Caco-2 (cell line): ENCODE measurements at regions of chr3 and their contacts with region 1.

Region 1: GRCh38 chr3:15557511-15557946 is 36.0 kb upstream of the COLQ start:
- DNase-seq: peak; percentile 71 to 73
- H3K4me3 ChIP-seq: no peak overlapping the region
- H3K4me3 Mint-ChIP-seq: no peak overlapping the region
- H3K27ac Mint-ChIP-seq: no peak overlapping the region
- H3K4me1 ChIP-seq: 0 out of 2 replicates have a peak, but pooled peaks cover 4% of the 10 kb centered on the region
- H3K4me1 Mint-ChIP-seq: peaks cover under 1% of the 10 kb centered on the region
- H3K27me3 ChIP-seq: no peaks in the 10 kb centered on the region
- H3K27me3 Mint-ChIP-seq: no peaks in the 10 kb centered on the region
- CTCF ChIP-seq: peak; percentile 22 to 54

Region 2: GRCh38 chr3:15405448-15406050 is 152.0 kb before region 1 on chr3:
- CTCF ChIA-PET with region 1: no interaction called
- POLR2A ChIA-PET with region 1: no interaction called
- intact Hi-C with region 1: loop called (anchors 5 kb)
- DNase-seq: peak in 1 of 2 experiments; percentile 39
- H3K4me3 ChIP-seq: no peak overlapping the region
- H3K4me3 Mint-ChIP-seq: no peak overlapping the region
- H3K27ac Mint-ChIP-seq: no peak overlapping the region
- H3K4me1 ChIP-seq: no peaks in the 10 kb centered on the region
- H3K4me1 Mint-ChIP-seq: no peaks in the 10 kb centered on the region
- H3K27me3 ChIP-seq: no peaks in the 10 kb centered on the region
- H3K27me3 Mint-ChIP-seq: no peaks in the 10 kb centered on the region
- CTCF ChIP-seq: peak; percentile 42 to 58

Region 3: DNA sequence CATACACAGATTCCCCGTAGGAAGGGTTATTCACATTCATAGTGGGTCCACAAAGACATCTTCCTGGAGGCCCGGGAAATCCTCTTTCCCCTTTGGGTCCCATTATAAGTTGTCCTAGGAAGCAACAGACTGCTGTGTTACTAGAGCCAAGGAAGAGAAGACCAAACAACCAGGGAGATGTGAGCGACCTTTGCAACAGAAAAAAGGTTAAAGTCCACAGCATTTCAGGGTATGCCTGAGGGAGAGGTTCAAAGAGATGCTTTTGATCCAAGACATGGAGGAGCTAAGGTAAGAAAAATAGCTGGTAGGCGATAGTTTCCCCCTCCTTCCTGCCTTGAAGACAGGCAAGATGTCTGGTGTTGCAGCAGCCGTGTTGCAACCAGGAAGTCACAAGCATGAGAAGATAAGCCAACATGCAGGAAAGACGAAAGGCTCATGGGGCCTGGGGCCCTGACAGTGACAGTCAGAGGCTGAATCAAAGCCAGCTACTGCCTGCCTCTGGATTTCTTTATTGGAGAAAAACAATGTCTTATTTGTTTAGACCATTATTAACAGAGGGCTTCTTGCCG is 99.2 kb before region 1 on chr3:
- CTCF ChIA-PET with region 1: no interaction called
- POLR2A ChIA-PET with region 1: no interaction called
- intact Hi-C with region 1: loop called (anchors 10 kb)
- DNase-seq: peak; percentile 20 to 49
- H3K4me3 ChIP-seq: no peak overlapping the region
- H3K4me3 Mint-ChIP-seq: no peak overlapping the region
- H3K27ac Mint-ChIP-seq: no peak overlapping the region
- H3K4me1 ChIP-seq: peaks cover 5% of the 10 kb centered on the region
- H3K4me1 Mint-ChIP-seq: peaks cover 6% of the 10 kb centered on the region
- H3K27me3 ChIP-seq: no peaks in the 10 kb centered on the region
- H3K27me3 Mint-ChIP-seq: peaks cover 5% of the 10 kb centered on the region
- CTCF ChIP-seq: no peak